BJ (cell line): ENCODE measurements at regions of chr1 and their contacts with region 1.

Region 1: GRCh38 chr1:39538588-39539465 is 37.8 kb downstream of the PABPC4 start:
- DNase-seq: no peak
- H3K4me3 ChIP-seq: no peak overlapping the region
- H3K27me3 ChIP-seq: no peaks in the 10 kb centered on the region
- CTCF ChIP-seq: peak; percentile 91

Region 2: GRCh38 chr1:38489844-38490270 is 1049.0 kb before region 1 on chr1:
- CTCF ChIA-PET with region 1: no interaction called
- POLR2A ChIA-PET with region 1: no interaction called
- DNase-seq: no peak
- H3K4me3 ChIP-seq: no peak overlapping the region
- H3K27me3 ChIP-seq: no peaks in the 10 kb centered on the region
- CTCF ChIP-seq: peak; percentile 39; the same call in 1 of the 2 replicates

Region 3: GRCh38 chr1:39525366-39526165 is 13.3 kb before region 1 on chr1:
- CTCF ChIA-PET with region 1: interaction called, 17 read pairs
- POLR2A ChIA-PET with region 1: no interaction called
- DNase-seq: no peak
- H3K4me3 ChIP-seq: no peak overlapping the region
- H3K27me3 ChIP-seq: no peaks in the 10 kb centered on the region
- CTCF ChIP-seq: no peak

Region 4: DNA sequence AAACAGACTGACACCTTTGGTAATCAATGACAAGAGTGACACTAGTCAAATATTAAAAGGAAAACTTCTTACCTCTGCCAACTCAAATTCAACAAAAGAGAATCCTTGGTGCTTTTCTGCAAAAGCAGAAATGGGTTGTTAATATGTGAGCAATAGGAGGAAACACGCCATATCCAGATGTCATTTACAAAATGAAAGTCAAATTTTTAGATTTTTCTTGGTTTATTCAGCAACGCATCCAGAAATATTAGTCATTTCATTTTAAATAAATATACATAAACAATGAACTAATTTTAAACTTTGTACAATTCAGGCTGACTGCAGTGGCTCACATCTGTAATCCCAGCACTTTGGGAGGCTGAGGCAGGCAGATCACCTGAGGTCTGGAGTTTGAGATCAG is 15.4 kb after region 1 on chr1:
- CTCF ChIA-PET with region 1: interaction called, 12 read pairs
- POLR2A ChIA-PET with region 1: interaction called, 6 read pairs
- DNase-seq: no peak
- H3K4me3 ChIP-seq: no peak overlapping the region
- H3K27me3 ChIP-seq: no peaks in the 10 kb centered on the region
- CTCF ChIP-seq: no peak

Region 5: GRCh38 chr1:39574646-39575045 is 35.8 kb after region 1 on chr1:
- CTCF ChIA-PET with region 1: interaction called, 11 read pairs
- POLR2A ChIA-PET with region 1: no interaction called
- DNase-seq: no peak
- H3K4me3 ChIP-seq: peak overlapping the region; percentile 84
- H3K27me3 ChIP-seq: no peaks in the 10 kb centered on the region
- CTCF ChIP-seq: no peak